ENCODE measurements at regions of chr11 and their contacts with region 1.

Region 1: GRCh38 chr11:12599408-12600143 is 74.6 kb upstream of the TEAD1 start:
- DNase-seq: peak; percentile 62 to 90 (median 78)
- ATAC-seq: peak; percentile 96 to 98 (median 98)
- H3K4me3 ChIP-seq: no peak overlapping the region
- H3K27ac ChIP-seq: no peak overlapping the region
- H3K4me1 ChIP-seq: no peaks in the 10 kb centered on the region
- H3K27me3 ChIP-seq: no peaks in the 10 kb centered on the region
- CTCF ChIP-seq: peak; percentile 53 to 87 (median 76)

Region 2: DNA sequence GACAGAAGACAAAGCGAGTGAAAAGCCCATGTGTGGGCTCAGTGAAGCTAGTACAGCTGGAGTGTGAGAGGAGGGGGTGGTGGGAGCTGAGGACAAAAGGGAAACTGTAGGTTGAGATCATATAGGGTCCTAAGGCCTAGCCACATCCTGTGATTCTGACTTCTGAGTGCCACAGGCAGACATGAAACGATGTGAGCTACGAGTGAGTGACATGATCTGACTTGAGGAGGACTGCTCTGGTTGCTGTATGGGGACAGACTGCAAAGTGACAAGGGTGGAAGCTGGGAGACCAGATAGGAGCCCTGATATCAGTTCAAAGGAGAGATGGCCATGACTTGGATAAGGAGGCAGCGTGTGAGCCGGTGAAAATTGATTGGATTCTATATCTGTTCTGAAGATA is 403.8 kb before region 1 on chr11:
- intact Hi-C with region 1: no loop called
- DNase-seq: no peak
- ATAC-seq: no peak
- H3K4me3 ChIP-seq: no peak overlapping the region
- H3K27ac ChIP-seq: no peak overlapping the region
- H3K4me1 ChIP-seq: peaks cover 19 to 47% (median 30%) of the 10 kb centered on the region in 3 donors
- H3K27me3 ChIP-seq: no peaks in the 10 kb centered on the region
- CTCF ChIP-seq: no peak

Region 3: DNA sequence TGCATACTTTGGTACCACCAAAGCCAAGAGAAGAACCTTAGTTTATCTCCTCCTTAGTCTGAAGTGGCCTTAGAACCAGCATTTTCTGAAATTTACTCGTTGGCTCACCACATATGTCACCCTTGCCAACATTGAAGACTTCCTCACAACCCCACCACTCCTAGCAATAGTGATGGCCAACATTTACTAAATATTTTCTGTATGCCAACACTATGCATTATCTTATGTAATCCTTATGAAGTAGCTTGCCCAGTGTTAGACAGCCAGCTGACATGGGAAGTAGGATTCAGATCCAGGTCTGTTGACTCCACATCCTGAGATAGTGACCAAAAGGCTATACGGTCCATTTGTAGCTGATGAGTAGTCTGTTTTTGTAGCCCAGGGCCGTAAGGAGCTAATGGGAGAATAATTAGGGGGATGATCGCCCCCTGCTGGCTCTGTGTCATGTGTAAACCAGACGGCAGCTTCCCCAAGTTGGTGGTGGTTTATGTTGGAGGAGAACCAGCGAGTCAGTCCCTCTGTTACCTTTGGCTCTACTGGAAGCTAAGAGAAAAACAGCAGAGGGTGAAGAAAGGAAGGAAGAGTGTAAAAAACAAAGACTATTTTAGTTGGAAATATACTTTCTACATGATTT is 289.1 kb after region 1 on chr11:
- intact Hi-C with region 1: loop called in 2 of 3 experiments (anchors 5 to 10 kb)
- DNase-seq: peak; percentile 70 to 90 (median 82)
- ATAC-seq: peak; percentile 83 to 95 (median 90)
- H3K4me3 ChIP-seq: no peak overlapping the region
- H3K27ac ChIP-seq: no peak overlapping the region
- H3K4me1 ChIP-seq: peaks cover 0 to 5% (median 0%) of the 10 kb centered on the region in 3 donors
- H3K27me3 ChIP-seq: no peaks in the 10 kb centered on the region
- CTCF ChIP-seq: peak; percentile 52 to 70 (median 58)